Activated T-helper 1 cell treated with anti-CD3 and anti-CD28 coated beads, Interleukin-12 subunit alpha, Interleukin-12 subunit beta, Interleukin-2, Interleukin-4 antibody, amounts not matched to agents 30 ng/mL and 10 ng/mL and 1 ng/mL, durations not matched to agents 14 hours and 24 hours and 36 hours (primary cell): ENCODE measurements at regions of chr17 and their contacts with region 1.

Region 1: DNA sequence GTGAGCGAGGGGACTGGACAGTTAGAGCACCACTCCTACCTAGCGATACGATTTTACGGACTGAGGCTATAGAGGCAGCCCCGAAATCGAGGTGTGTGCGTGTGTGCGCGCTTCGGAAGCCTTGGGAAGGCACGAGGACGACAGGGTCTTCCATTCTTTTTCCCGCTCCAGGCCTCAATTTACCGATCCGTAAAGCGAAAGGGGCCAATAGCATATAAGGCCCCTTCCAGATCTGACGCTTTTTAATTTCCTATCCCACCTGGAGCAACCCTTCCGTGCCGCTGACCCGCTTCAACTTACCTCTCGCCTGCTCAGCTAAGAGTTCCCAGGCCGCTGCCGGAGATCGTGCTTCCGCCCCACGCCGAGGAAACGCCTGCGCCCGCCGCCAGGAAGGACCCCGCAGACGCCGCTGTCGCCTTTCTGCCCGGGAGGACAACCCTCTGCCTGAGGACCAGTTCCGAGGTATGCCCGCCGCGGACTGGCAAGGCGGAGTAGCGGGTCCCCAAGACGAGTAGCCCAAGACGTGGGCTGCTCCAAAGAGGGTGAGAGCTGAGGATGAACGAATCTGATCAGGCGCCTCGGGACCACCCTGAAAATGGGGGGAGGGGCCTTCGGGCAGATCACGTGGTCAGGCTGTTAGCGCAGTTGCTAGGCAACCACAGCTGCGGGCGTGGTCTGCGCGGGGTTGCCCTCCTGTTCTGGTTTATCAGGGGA is at the start of gene EFTUD2:
- DNase-seq: peak; percentile 88
- H3K4me3 Mint-ChIP-seq: peak within 1 kb of the TSS; percentile 97
- H3K27ac Mint-ChIP-seq: peak within 1 kb of the TSS; percentile 98
- H3K4me1 Mint-ChIP-seq: peaks cover 30% of the 10 kb centered on the region
- H3K27me3 Mint-ChIP-seq: peaks cover 12% of the 10 kb centered on the region
- total RNA-seq, gene EFTUD2: 206 and 219 TPM in 2 replicates

Region 2: GRCh38 chr17:44689477-44690217 is 209.6 kb before region 1 on chr17 and contains the start of gene CCDC43:
- intact Hi-C with region 1: loop called (anchors 1 kb)
- DNase-seq: peak; percentile 91
- H3K4me3 Mint-ChIP-seq: peak within 1 kb of the TSS; percentile 99
- H3K27ac Mint-ChIP-seq: peak within 1 kb of the TSS; percentile 89
- H3K4me1 Mint-ChIP-seq: peaks cover 32% of the 10 kb centered on the region
- H3K27me3 Mint-ChIP-seq: no peaks in the 10 kb centered on the region
- total RNA-seq, gene CCDC43: 42.6 and 44.6 TPM in 2 replicates

Region 3: DNA sequence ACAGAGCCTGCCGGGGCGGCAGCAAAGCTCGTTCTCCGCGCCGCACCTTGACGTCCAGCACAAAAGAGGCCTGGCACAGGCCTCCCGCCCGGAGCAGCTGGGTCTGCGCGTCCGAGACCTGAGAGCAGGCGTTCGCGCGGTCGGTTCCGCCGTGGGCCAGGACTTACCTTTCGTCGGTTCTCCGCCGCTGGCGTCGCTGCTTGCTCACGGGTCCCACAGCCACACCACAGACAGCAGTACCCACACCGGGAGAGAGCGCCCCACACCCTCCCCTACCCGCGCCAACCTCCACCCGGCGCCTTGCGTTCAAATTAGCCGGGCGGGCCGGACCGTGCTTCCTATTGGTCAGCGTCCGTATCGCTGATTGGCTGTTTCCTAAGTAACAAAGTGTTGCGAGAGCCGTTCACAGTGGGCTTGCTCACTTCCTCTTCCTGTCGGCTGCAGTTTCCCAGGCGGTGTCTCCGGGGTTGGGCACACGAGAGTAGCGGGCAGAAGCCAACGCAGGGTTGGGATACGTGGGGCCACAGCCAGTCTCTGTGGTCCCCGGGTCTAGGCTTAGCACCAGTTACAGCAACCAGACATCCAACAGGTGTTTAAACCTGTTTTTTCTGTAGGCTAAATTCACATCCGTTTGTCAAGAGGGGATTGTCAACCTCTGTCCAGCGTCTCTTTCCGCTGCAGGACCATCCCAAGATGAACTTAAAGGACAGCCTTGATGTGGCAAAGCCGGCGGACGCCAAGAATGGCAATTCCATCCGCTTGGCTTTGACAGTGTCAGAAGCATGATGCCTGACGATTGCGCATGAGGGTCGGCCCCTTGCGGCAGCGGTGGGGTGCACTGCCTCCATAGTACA is 48.5 kb after region 1 on chr17 and contains the start of gene KIF18B:
- intact Hi-C with region 1: loop called (anchors 1 kb)
- DNase-seq: peak; percentile 90
- H3K4me3 Mint-ChIP-seq: peak within 1 kb of the TSS; percentile 95
- H3K27ac Mint-ChIP-seq: peak within 1 kb of the TSS; percentile 92
- H3K4me1 Mint-ChIP-seq: peaks cover 37% of the 10 kb centered on the region
- H3K27me3 Mint-ChIP-seq: peaks cover 2% of the 10 kb centered on the region
- total RNA-seq, gene KIF18B: 41.4 and 42.8 TPM in 2 replicates

Region 4: GRCh38 chr17:45051060-45051719 is 152.0 kb after region 1 on chr17 and contains the start of gene DCAKD:
- intact Hi-C with region 1: loop called (anchors 1 kb)
- DNase-seq: peak; percentile 93
- H3K4me3 Mint-ChIP-seq: peak within 1 kb of the TSS; percentile 92
- H3K27ac Mint-ChIP-seq: peak within 1 kb of the TSS; percentile 94
- H3K4me1 Mint-ChIP-seq: peaks cover 47% of the 10 kb centered on the region
- H3K27me3 Mint-ChIP-seq: no peaks in the 10 kb centered on the region
- total RNA-seq, gene DCAKD: 24.0 and 24.9 TPM in 2 replicates

Region 5: GRCh38 chr17:45228763-45229539 is 329.7 kb after region 1 on chr17:
- intact Hi-C with region 1: loop called (anchors 10 kb)
- DNase-seq: peak; percentile 81
- H3K4me3 Mint-ChIP-seq: peak overlapping the region; percentile 99
- H3K27ac Mint-ChIP-seq: peak overlapping the region; percentile 97
- H3K4me1 Mint-ChIP-seq: peaks cover 94% of the 10 kb centered on the region
- H3K27me3 Mint-ChIP-seq: no peaks in the 10 kb centered on the region